IMR-90 (cell line): ENCODE measurements at regions of chr3 and their contacts with region 1.

Region 1: DNA sequence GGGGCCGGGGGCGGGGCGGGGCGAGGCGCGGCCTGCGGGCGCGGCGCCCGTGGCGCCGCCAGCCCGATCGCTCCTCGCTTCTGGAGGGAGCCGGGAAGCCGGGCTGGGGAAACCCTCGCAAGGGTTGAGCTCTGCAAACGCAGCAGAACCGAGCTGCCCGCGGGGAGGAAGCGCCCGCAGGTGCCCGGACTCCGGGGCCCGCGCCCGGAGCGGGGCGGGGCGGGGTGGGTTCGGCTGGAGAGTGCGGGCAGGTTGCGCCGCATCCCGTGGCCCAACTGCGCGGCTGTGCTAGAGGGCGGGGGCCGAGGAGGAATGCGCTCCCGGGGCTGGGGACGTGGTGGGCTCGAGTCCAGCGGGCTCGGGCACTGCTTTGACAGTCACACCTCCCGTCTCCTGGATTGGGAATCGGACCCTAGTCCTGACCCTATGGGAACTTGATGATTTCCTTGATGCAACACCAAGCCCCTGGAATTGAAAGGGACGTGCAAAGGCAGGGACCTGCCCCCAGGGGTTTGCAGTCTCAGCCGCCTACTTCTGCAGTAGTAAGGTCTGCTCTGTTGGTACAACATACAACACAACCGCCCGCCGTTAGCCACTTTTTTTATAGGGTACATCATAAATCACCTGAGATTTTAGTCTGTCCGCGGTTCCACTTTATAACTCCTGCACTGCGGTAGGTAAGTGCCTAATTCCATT is 34.3 kb downstream of the ZBTB38 start:
- DNase-seq: peak; percentile 78
- ATAC-seq: peak; percentile 46
- H3K4me3 ChIP-seq: peak overlapping the region; percentile 73
- H3K27ac ChIP-seq: peak overlapping the region; percentile 100
- H3K4me1 ChIP-seq: peaks cover 37% of the 10 kb centered on the region
- H3K27me3 ChIP-seq: no peaks in the 10 kb centered on the region
- CTCF ChIP-seq: no peak
- POLR2A ChIP-seq: peak; percentile 57
- RAD21 ChIP-seq: no peak

Region 2: GRCh38 chr3:141311496-141312353 is 90.9 kb before region 1 on chr3:
- CTCF ChIA-PET with region 1: no interaction called
- POLR2A ChIA-PET with region 1: no interaction called
- dilution Hi-C with region 1: no loop called
- in situ Hi-C with region 1: no loop called
- intact Hi-C with region 1: loop called (anchors 5 kb)
- DNase-seq: peak; percentile 98
- ATAC-seq: peak; percentile 97
- H3K4me3 ChIP-seq: peak overlapping the region; percentile 74
- H3K27ac ChIP-seq: peak overlapping the region; percentile 75
- H3K4me1 ChIP-seq: peaks cover 4% of the 10 kb centered on the region; the same call in 1 of the 2 replicates
- H3K27me3 ChIP-seq: no peaks in the 10 kb centered on the region
- CTCF ChIP-seq: peak; percentile 90
- POLR2A ChIP-seq: peak; percentile 33
- RAD21 ChIP-seq: peak; percentile 92

Region 3: GRCh38 chr3:141368062-141368924 is 34.3 kb before region 1 on chr3 and contains the start of gene ZBTB38:
- CTCF ChIA-PET with region 1: interaction called, 4 read pairs
- POLR2A ChIA-PET with region 1: interaction called, 3 read pairs
- dilution Hi-C with region 1: no loop called
- in situ Hi-C with region 1: no loop called
- intact Hi-C with region 1: loop called (anchors 1 kb)
- DNase-seq: peak; percentile 97
- ATAC-seq: peak; percentile 71
- H3K4me3 ChIP-seq: peak within 1 kb of the TSS; percentile 45; the same call in 1 of the 2 replicates
- H3K27ac ChIP-seq: peak within 1 kb of the TSS; percentile 99
- H3K4me1 ChIP-seq: peaks cover 21% of the 10 kb centered on the region
- H3K27me3 ChIP-seq: no peaks in the 10 kb centered on the region
- CTCF ChIP-seq: no peak
- POLR2A ChIP-seq: peak; percentile 43
- RAD21 ChIP-seq: no peak; the same call in 1 of the 2 replicates
- total RNA-seq, gene ZBTB38: 230 and 274 TPM in 2 replicates

Region 4: GRCh38 chr3:141386611-141387111 is 16.0 kb before region 1 on chr3:
- CTCF ChIA-PET with region 1: interaction called, 4 read pairs
- POLR2A ChIA-PET with region 1: interaction called, 4 read pairs
- dilution Hi-C with region 1: no loop called
- in situ Hi-C with region 1: no loop called
- intact Hi-C with region 1: loop called (anchors 2 kb)
- DNase-seq: peak; percentile 83
- ATAC-seq: peak; percentile 45
- H3K4me3 ChIP-seq: peak overlapping the region; percentile 44
- H3K27ac ChIP-seq: peak overlapping the region; percentile 78
- H3K4me1 ChIP-seq: peaks cover 20% of the 10 kb centered on the region
- H3K27me3 ChIP-seq: no peaks in the 10 kb centered on the region
- CTCF ChIP-seq: no peak
- POLR2A ChIP-seq: peak; percentile 69
- RAD21 ChIP-seq: no peak

Region 5: GRCh38 chr3:141441381-141442364 is 39.0 kb after region 1 on chr3:
- CTCF ChIA-PET with region 1: interaction called, 3 read pairs
- POLR2A ChIA-PET with region 1: no interaction called
- dilution Hi-C with region 1: no loop called
- in situ Hi-C with region 1: no loop called
- intact Hi-C with region 1: loop called (anchors 2 kb)
- DNase-seq: peak; percentile 90
- ATAC-seq: peak; percentile 72
- H3K4me3 ChIP-seq: no peak overlapping the region
- H3K27ac ChIP-seq: peak overlapping the region; percentile 97
- H3K4me1 ChIP-seq: peaks cover 34% of the 10 kb centered on the region
- H3K27me3 ChIP-seq: no peaks in the 10 kb centered on the region
- CTCF ChIP-seq: peak; percentile 67
- POLR2A ChIP-seq: no peak
- RAD21 ChIP-seq: peak; percentile 51